BJ (cell line): ENCODE measurements at regions of chr5 and their contacts with region 1.

Region 1: GRCh38 chr5:67209142-67209771 is 12.7 kb upstream of the CD180 start:
- DNase-seq: no peak
- H3K4me3 ChIP-seq: no peak overlapping the region
- H3K27me3 ChIP-seq: no peaks in the 10 kb centered on the region; the same call in 1 of the 2 replicates
- CTCF ChIP-seq: peak; percentile 72

Region 2: DNA sequence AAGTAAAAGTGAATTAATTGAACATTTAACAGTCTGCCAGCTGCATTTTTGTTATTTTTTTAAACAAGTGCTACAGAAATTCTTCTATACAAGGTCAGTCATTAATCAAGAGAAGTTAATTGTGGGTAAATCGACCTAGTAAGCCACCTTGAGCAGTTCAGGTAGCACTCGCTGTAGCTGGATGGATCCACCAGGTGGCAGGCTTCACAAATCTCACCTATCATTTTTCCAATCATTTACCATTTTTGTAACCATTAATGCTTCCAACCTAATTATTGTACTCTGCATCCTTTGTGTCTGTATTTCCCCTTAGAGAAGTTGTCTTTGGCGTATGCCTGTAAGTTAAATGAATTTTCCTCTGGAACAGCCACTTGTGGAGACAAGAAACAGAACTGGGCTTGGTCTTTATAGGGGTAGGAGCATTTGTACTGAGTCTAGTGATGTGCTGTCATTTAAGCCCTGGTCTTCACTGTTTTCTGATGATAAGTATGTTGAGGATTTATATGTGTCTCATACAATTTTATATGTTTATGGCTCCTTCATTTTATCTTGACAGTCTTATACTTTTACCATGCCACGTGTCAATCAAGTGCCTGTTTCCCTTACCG is 52.2 kb before region 1 on chr5:
- CTCF ChIA-PET with region 1: interaction called, 28 read pairs
- POLR2A ChIA-PET with region 1: no interaction called
- DNase-seq: no peak
- H3K4me3 ChIP-seq: no peak overlapping the region
- H3K27me3 ChIP-seq: no peaks in the 10 kb centered on the region
- CTCF ChIP-seq: peak; percentile 74

Region 3: GRCh38 chr5:67163231-67163756 is 46.0 kb before region 1 on chr5:
- CTCF ChIA-PET with region 1: interaction called, 10 read pairs
- POLR2A ChIA-PET with region 1: no interaction called
- DNase-seq: no peak
- H3K4me3 ChIP-seq: no peak overlapping the region
- H3K27me3 ChIP-seq: no peaks in the 10 kb centered on the region
- CTCF ChIP-seq: no peak

Region 4: GRCh38 chr5:67221487-67222242 is 12.4 kb after region 1 on chr5:
- CTCF ChIA-PET with region 1: interaction called, 11 read pairs
- POLR2A ChIA-PET with region 1: no interaction called
- DNase-seq: no peak
- H3K4me3 ChIP-seq: no peak overlapping the region
- H3K27me3 ChIP-seq: no peaks in the 10 kb centered on the region
- CTCF ChIP-seq: no peak